Activated CD4-positive, alpha-beta memory T cell treated with anti-CD3 and anti-CD28 coated beads for 36 hours (primary cell): ENCODE measurements at regions of chr2 and their contacts with region 1.

Region 1: DNA sequence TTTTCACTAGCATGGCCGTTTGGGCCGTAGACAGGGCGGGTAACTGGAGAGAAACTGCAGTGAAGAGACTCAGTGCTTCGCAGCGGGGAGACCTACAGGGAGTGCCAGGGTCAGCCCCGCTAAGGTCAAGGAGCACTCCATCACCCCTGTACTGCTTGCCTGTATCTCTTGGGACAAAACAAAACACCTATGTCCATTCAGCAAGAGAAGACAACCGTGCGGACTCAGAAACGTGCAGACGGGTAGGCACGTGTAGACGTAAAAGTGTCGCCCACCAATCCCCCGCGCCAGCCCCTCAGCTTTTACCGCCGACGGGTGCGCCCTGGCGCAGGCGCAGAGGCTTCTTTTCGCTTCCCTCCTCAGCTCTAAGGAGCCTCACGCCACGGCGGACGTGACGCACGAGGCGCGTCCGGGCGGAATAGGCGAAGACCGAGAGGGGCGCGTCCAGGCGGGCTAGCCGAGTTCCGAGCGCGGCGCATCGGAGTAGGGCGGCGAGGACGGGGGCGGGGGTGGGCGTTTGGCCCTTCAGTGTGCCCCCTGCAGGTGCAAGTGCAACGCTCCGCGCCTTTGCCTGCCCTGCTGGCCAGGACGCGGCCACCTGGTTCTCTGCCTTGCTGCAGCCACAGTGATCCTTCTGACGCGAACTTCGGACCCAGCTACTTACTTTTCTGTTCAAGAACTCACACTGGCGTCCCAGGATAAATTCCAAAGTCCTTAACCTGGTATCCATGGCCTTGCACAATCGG is 3.3 kb upstream of the SOS1 start:
- DNase-seq: peak; percentile 97
- H3K4me3 Mint-ChIP-seq: peak overlapping the region; percentile 80
- H3K27ac Mint-ChIP-seq: peak overlapping the region; percentile 95
- H3K4me1 Mint-ChIP-seq: peaks cover 42% of the 10 kb centered on the region
- H3K27me3 Mint-ChIP-seq: no peaks in the 10 kb centered on the region

Region 2: GRCh38 chr2:38474715-38475566 is 649.2 kb before region 1 on chr2:
- CTCF ChIA-PET with region 1: no interaction called
- POLR2A ChIA-PET with region 1: no interaction called
- intact Hi-C with region 1: loop called (anchors 10 kb)
- DNase-seq: peak; percentile 73
- H3K4me3 Mint-ChIP-seq: no peak overlapping the region
- H3K27ac Mint-ChIP-seq: no peak overlapping the region
- H3K4me1 Mint-ChIP-seq: peaks cover 31% of the 10 kb centered on the region
- H3K27me3 Mint-ChIP-seq: peaks cover 14% of the 10 kb centered on the region

Region 3: GRCh38 chr2:38750891-38751595 is 373.1 kb before region 1 on chr2 and contains the start of gene SRSF7:
- CTCF ChIA-PET with region 1: no interaction called
- POLR2A ChIA-PET with region 1: interaction called, 9 read pairs
- intact Hi-C with region 1: loop called (anchors 5 kb)
- DNase-seq: peak; percentile 98
- H3K4me3 Mint-ChIP-seq: peak within 1 kb of the TSS; percentile 95
- H3K27ac Mint-ChIP-seq: peak within 1 kb of the TSS; percentile 100
- H3K4me1 Mint-ChIP-seq: peaks cover 53% of the 10 kb centered on the region
- H3K27me3 Mint-ChIP-seq: peaks cover 6% of the 10 kb centered on the region
- total RNA-seq, gene SRSF7: 276 to 279 TPM

Region 4: DNA sequence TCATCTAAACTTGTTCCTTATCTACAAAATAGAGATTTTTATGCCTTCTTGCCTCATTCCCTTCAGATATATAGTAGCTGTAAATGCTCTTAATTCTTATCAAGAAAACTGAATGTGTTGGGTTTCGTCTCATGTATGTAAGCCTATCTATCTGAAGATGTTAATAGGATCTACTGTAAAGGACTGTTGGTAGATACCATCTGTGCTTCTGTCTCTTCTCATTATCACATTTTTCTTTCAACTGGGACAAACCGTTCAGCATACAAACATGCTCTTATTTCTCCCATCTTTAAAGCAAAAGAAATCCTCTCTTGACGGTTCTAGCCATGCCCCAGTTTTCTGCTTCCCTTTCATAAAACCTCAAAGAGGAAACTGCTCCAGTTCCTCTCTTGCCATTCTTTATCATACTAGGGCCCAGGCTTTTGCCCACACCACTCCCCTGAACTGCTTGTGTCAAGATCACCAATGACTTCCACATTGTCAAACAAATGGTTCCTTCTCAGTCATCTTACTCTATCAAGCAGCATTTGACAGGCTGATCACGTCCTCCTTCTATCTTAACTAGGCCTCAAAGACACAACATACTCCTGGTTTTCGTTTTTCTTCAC is 145.8 kb before region 1 on chr2:
- CTCF ChIA-PET with region 1: no interaction called
- POLR2A ChIA-PET with region 1: no interaction called
- intact Hi-C with region 1: no loop called
- DNase-seq: no peak
- H3K4me3 Mint-ChIP-seq: no peak overlapping the region
- H3K27ac Mint-ChIP-seq: no peak overlapping the region
- H3K4me1 Mint-ChIP-seq: no peaks in the 10 kb centered on the region
- H3K27me3 Mint-ChIP-seq: no peaks in the 10 kb centered on the region

Region 5: GRCh38 chr2:39069136-39069515 is 55.0 kb before region 1 on chr2:
- CTCF ChIA-PET with region 1: interaction called, 6 read pairs
- POLR2A ChIA-PET with region 1: interaction called, 3 read pairs
- intact Hi-C with region 1: loop called (anchors 2 kb)
- DNase-seq: peak; percentile 57
- H3K4me3 Mint-ChIP-seq: no peak overlapping the region
- H3K27ac Mint-ChIP-seq: no peak overlapping the region
- H3K4me1 Mint-ChIP-seq: peaks cover 34% of the 10 kb centered on the region
- H3K27me3 Mint-ChIP-seq: no peaks in the 10 kb centered on the region

Region 6: DNA sequence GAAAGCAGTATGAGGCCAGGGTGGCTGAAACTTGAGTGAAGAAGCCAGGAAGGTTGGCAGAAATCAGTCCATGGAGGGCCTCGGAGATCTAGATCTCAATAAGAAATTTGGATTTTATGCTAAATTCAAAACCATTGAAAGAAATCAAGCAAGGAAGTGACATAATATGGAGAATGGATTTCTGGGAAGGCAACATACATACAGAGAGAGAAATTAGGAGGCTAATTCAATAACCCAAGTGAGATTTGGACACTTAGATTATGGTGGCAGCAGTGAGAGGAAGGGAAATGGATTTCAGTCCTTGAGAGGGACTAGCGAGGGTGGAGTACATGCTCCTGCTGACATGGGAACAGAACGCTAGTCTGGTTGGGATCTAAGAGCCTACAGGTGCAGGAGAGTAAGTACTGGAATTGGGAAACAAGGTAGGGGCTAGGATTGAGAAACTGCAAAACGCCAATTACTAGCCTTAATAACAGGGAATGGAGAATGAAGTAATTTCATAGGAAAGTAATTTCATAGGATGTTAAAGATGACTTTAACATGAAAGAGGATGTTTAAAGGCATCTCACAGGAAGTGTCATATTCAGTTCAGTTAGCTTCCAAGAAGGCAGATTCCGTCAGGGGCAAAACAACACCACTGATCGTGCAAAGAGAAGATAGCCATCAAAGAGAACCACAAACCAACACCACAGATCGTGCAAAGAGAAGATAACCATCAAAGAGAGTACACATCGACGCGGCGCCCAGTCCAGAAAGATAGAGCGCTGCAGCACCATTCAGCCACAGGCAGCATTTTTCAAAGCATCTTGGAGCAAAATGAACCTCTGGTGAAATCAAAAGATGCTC is 92.4 kb after region 1 on chr2:
- CTCF ChIA-PET with region 1: interaction called, 15 read pairs
- POLR2A ChIA-PET with region 1: interaction called, 11 read pairs
- intact Hi-C with region 1: loop called (anchors 1 kb)
- DNase-seq: peak; percentile 79
- H3K4me3 Mint-ChIP-seq: peak overlapping the region; percentile 38
- H3K27ac Mint-ChIP-seq: peak overlapping the region; percentile 85
- H3K4me1 Mint-ChIP-seq: peaks cover 56% of the 10 kb centered on the region
- H3K27me3 Mint-ChIP-seq: no peaks in the 10 kb centered on the region

Region 7: GRCh38 chr2:39377226-39377939 is 253.2 kb after region 1 on chr2:
- CTCF ChIA-PET with region 1: no interaction called
- POLR2A ChIA-PET with region 1: no interaction called
- intact Hi-C with region 1: no loop called
- DNase-seq: peak; percentile 60
- H3K4me3 Mint-ChIP-seq: no peak overlapping the region
- H3K27ac Mint-ChIP-seq: peak overlapping the region; percentile 69
- H3K4me1 Mint-ChIP-seq: peaks cover 19% of the 10 kb centered on the region
- H3K27me3 Mint-ChIP-seq: no peaks in the 10 kb centered on the region

Region 8: DNA sequence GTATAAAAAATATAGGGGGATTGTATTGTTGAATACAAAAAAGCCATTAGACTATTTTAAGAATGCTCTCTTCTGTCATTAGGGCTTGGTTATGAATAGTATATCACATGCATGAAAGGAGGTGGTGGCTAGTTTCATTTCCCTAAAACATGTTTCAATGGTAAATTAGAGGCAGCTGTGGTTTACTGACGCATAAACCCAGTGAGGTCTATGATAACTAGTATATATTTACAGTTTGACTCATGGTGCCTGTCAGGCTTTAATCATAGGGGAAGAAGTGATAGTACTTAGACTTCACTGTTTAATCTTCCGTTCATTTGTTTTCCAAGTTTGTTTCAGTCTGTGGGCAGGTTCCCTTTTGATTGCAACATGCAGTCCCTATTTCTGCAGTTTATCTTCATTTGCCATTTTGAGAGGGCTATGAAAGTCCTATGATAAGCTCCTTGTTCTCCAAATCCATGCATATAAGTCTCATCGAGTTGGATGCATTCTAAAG is 368.0 kb after region 1 on chr2:
- CTCF ChIA-PET with region 1: no interaction called
- POLR2A ChIA-PET with region 1: no interaction called
- intact Hi-C with region 1: loop called (anchors 1 kb)
- DNase-seq: peak; percentile 33
- H3K4me3 Mint-ChIP-seq: no peak overlapping the region
- H3K27ac Mint-ChIP-seq: no peak overlapping the region
- H3K4me1 Mint-ChIP-seq: peaks cover 41% of the 10 kb centered on the region
- H3K27me3 Mint-ChIP-seq: peaks cover 7% of the 10 kb centered on the region